HEK293 (cell line): ENCODE measurements at regions of chr21 and their contacts with region 1.

Region 1: GRCh38 chr21:36917471-36918158 is 48.9 kb downstream of the HLCS start:
- H3K4me3 ChIP-seq: no peak overlapping the region
- H3K27ac ChIP-seq: no peak overlapping the region; the same call in 1 of the 2 replicates
- H3K4me1 ChIP-seq: peaks cover 25% of the 10 kb centered on the region
- CTCF ChIP-seq: peak; percentile 76

Region 2: GRCh38 chr21:36902796-36903195 is 14.8 kb before region 1 on chr21:
- CTCF ChIA-PET with region 1: interaction called, 10 read pairs
- POLR2A ChIA-PET with region 1: no interaction called
- H3K4me3 ChIP-seq: no peak overlapping the region
- H3K27ac ChIP-seq: no peak overlapping the region
- H3K4me1 ChIP-seq: no peaks in the 10 kb centered on the region
- CTCF ChIP-seq: no peak

Region 3: GRCh38 chr21:36927719-36928117 is 10.1 kb after region 1 on chr21:
- CTCF ChIA-PET with region 1: interaction called, 21 read pairs
- POLR2A ChIA-PET with region 1: no interaction called
- H3K4me3 ChIP-seq: no peak overlapping the region
- H3K27ac ChIP-seq: no peak overlapping the region
- H3K4me1 ChIP-seq: peaks cover 5% of the 10 kb centered on the region
- CTCF ChIP-seq: peak; percentile 82

Region 4: GRCh38 chr21:37017951-37018679 is 100.5 kb after region 1 on chr21:
- CTCF ChIA-PET with region 1: no interaction called
- POLR2A ChIA-PET with region 1: no interaction called
- H3K4me3 ChIP-seq: no peak overlapping the region
- H3K27ac ChIP-seq: no peak overlapping the region
- H3K4me1 ChIP-seq: no peaks in the 10 kb centered on the region
- CTCF ChIP-seq: no peak

Region 5: GRCh38 chr21:37866027-37866426 is 948.4 kb after region 1 on chr21:
- CTCF ChIA-PET with region 1: no interaction called
- POLR2A ChIA-PET with region 1: no interaction called
- H3K4me3 ChIP-seq: no peak overlapping the region
- H3K27ac ChIP-seq: no peak overlapping the region
- H3K4me1 ChIP-seq: no peaks in the 10 kb centered on the region
- CTCF ChIP-seq: no peak